ENCODE measurements at regions of chr11 and their contacts with region 1.

Region 1: DNA sequence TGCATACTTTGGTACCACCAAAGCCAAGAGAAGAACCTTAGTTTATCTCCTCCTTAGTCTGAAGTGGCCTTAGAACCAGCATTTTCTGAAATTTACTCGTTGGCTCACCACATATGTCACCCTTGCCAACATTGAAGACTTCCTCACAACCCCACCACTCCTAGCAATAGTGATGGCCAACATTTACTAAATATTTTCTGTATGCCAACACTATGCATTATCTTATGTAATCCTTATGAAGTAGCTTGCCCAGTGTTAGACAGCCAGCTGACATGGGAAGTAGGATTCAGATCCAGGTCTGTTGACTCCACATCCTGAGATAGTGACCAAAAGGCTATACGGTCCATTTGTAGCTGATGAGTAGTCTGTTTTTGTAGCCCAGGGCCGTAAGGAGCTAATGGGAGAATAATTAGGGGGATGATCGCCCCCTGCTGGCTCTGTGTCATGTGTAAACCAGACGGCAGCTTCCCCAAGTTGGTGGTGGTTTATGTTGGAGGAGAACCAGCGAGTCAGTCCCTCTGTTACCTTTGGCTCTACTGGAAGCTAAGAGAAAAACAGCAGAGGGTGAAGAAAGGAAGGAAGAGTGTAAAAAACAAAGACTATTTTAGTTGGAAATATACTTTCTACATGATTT is 120.5 kb upstream of the RASSF10 start:
- DNase-seq: peak; percentile 83 to 88 (median 86)
- ATAC-seq: peak; percentile 72 to 91 (median 86)
- H3K4me3 ChIP-seq: no peak overlapping the region
- H3K27ac ChIP-seq: peak overlapping the region in 11 of 12 donors; percentile 37 to 84 (median 71)
- H3K4me1 ChIP-seq: peaks cover 0 to 52% (median 26%) of the 10 kb centered on the region in 12 donors
- H3K27me3 ChIP-seq: no peaks in the 10 kb centered on the region
- CTCF ChIP-seq: peak; percentile 54 to 88 (median 78)
- POLR2A ChIP-seq: no peak

Region 2: GRCh38 chr11:12485328-12485727 is 403.3 kb before region 1 on chr11:
- intact Hi-C with region 1: loop called in 1 of 10 experiments (anchors 2 kb)
- DNase-seq: no peak
- ATAC-seq: no peak
- H3K4me3 ChIP-seq: no peak overlapping the region
- H3K27ac ChIP-seq: no peak overlapping the region
- H3K4me1 ChIP-seq: peaks cover 0 to 24% (median 9%) of the 10 kb centered on the region in 12 donors
- H3K27me3 ChIP-seq: no peaks in the 10 kb centered on the region
- CTCF ChIP-seq: peak in 8 of 12 donors; percentile 9 to 44 (median 34)
- POLR2A ChIP-seq: no peak

Region 3: DNA sequence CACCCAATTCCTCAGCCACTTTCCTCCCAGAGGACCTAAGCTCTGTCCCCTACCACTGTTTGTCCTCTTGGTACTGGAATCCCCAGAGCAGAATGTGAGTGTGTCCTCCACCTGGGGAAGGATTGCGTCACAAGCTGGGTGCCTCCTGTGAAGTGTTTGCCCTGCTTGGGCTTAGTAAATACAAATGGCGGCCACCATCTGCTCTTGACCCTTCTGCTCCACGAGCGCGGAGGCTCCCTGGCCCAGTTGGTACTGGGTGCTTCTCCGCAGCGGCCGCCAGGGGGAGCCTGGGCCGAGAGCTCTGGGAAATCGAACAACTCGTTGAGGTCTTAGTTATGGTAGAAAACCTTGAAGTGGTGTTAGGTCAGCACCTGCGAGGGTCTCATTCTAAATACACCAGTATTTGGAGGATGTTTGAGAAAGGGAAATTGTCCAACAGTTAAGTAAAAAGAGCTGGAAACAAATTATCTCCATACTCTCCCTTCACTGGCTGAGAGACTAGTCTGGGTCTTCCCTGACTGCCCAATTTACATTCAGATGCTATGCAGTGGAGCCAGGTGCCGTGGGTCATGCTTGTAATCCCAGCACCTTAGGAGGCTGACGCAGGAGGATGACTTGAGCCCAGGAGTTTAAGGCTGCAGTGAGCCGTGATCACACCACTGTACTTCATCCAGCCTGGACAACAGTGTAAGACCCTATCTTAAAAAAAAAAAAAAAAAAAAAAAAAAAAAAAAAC is 289.1 kb before region 1 on chr11:
- intact Hi-C with region 1: loop called in 7 of 10 experiments (anchors 2 to 5 kb)
- DNase-seq: peak; percentile 22 to 76 (median 46)
- ATAC-seq: peak in 3 of 4 donors; percentile 33 to 76 (median 59)
- H3K4me3 ChIP-seq: no peak overlapping the region
- H3K27ac ChIP-seq: no peak overlapping the region
- H3K4me1 ChIP-seq: peaks cover 0 to 33% (median 15%) of the 10 kb centered on the region in 12 donors
- H3K27me3 ChIP-seq: no peaks in the 10 kb centered on the region
- CTCF ChIP-seq: peak; percentile 50 to 72 (median 62)
- POLR2A ChIP-seq: no peak

Region 4: GRCh38 chr11:12680246-12680939 is 208.2 kb before region 1 on chr11:
- intact Hi-C with region 1: loop called in 7 of 10 experiments (anchors 1 to 10 kb)
- DNase-seq: peak; percentile 83 to 90 (median 86)
- ATAC-seq: peak; percentile 65 to 95 (median 89)
- H3K4me3 ChIP-seq: peak overlapping the region in 7 of 12 donors; percentile 2 to 31 (median 18)
- H3K27ac ChIP-seq: peak overlapping the region in 10 of 12 donors; percentile 10 to 97 (median 44)
- H3K4me1 ChIP-seq: peaks cover 6 to 78% (median 51%) of the 10 kb centered on the region in 12 donors
- H3K27me3 ChIP-seq: peaks cover 0 to 33% (median 0%) of the 10 kb centered on the region in 9 donors
- CTCF ChIP-seq: no peak
- POLR2A ChIP-seq: no peak

Region 5: DNA sequence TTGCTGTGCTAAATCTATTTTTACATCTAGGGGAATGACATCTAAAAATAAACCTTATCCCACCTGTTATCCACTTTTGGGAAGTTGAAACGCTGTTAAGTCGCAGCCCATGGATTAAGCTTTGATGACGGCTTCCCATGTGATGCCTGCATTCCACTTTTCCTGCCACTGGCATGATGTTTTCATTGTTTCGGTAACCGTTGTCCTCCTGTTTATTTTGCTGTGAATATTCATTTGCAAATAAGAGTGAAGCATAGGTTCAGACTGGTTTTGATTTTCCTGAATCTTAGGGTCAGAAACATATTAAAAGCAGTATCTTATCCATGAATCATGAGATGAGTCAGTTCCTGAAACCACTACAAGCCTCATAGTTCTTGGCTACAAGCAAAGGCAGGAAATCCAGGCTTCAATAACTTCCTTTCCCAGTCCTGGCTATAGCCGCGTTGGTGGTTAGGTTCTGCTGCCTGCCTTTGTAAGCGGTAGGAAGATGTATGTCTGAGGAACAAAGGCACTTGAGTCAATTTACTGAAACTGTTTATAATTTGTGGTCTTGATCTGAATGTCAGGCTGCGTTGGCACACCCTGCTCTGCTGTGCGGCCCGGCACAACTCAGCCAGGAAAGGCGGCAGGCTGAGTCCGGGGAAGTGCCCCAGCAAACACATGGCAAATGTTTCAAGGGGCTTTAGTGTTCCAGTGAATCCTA is 195.0 kb before region 1 on chr11:
- intact Hi-C with region 1: loop called in 1 of 10 experiments (anchors 5 kb)
- DNase-seq: peak in 4 of 5 donors; percentile 31 to 67 (median 62)
- ATAC-seq: peak; percentile 68 to 86 (median 82)
- H3K4me3 ChIP-seq: peak overlapping the region in 9 of 12 donors; percentile 8 to 37 (median 21)
- H3K27ac ChIP-seq: peak overlapping the region; percentile 59 to 92 (median 89)
- H3K4me1 ChIP-seq: peaks cover 22 to 88% (median 64%) of the 10 kb centered on the region in 12 donors
- H3K27me3 ChIP-seq: peaks cover 0 to 15% (median 0%) of the 10 kb centered on the region in 9 donors
- CTCF ChIP-seq: no peak
- POLR2A ChIP-seq: peak in 1 of 2 donors; percentile 35

Region 6: GRCh38 chr11:12827929-12828812 is 60.5 kb before region 1 on chr11:
- intact Hi-C with region 1: loop called in 3 of 10 experiments (anchors 5 kb)
- DNase-seq: peak in 2 of 5 donors; percentile 38 to 39
- ATAC-seq: peak; percentile 63 to 87 (median 74)
- H3K4me3 ChIP-seq: peak overlapping the region in 11 of 12 donors; percentile 16 to 61 (median 46)
- H3K27ac ChIP-seq: peak overlapping the region in 11 of 12 donors; percentile 12 to 73 (median 53)
- H3K4me1 ChIP-seq: peaks cover 0 to 55% (median 27%) of the 10 kb centered on the region in 12 donors
- H3K27me3 ChIP-seq: no peaks in the 10 kb centered on the region
- CTCF ChIP-seq: no peak
- POLR2A ChIP-seq: no peak